ENCODE measurements at regions of chr5 and their contacts with region 1.

Region 1: DNA sequence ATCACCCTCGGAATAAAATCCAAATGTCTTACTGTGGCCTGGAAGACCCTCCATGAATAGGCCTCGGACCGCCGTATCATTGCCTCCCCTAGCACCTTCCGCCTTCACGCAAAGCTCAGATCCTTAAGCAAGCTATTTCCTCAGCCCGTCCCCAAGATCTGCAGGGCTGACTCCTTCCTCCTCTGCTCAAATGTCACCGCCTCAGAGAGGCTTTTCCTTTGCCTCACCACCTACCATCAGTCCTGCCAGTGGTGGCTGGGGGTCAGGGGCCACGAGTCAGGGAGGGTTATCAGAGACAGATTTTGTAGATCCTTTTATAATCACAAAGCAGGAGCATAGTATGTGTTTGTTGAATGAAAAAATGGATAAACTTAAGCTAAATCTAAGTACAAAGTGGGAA is 74.4 kb upstream of the KIF2A start:
- DNase-seq: no peak
- ATAC-seq: no peak
- H3K4me3 ChIP-seq: no peak overlapping the region
- H3K27ac ChIP-seq: no peak overlapping the region
- H3K4me1 ChIP-seq: peaks cover 0 to 4% (median 0%) of the 10 kb centered on the region in 12 donors
- H3K27me3 ChIP-seq: no peaks in the 10 kb centered on the region
- CTCF ChIP-seq: no peak
- POLR2A ChIP-seq: no peak

Region 2: GRCh38 chr5:62284946-62285891 is 53.6 kb after region 1 on chr5:
- intact Hi-C with region 1: loop called in 1 of 10 experiments (anchors 5 kb)
- DNase-seq: no peak
- ATAC-seq: no peak
- H3K4me3 ChIP-seq: no peak overlapping the region
- H3K27ac ChIP-seq: no peak overlapping the region
- H3K4me1 ChIP-seq: no peaks in the 10 kb centered on the region
- H3K27me3 ChIP-seq: peaks cover 0 to 3% (median 0%) of the 10 kb centered on the region in 9 donors
- CTCF ChIP-seq: no peak
- POLR2A ChIP-seq: no peak

Region 3: GRCh38 chr5:62354028-62354874 is 122.7 kb after region 1 on chr5:
- intact Hi-C with region 1: loop called in 1 of 10 experiments (anchors 5 kb)
- DNase-seq: no peak
- ATAC-seq: peak in 3 of 4 donors; percentile 49 to 64 (median 52)
- H3K4me3 ChIP-seq: no peak overlapping the region
- H3K27ac ChIP-seq: no peak overlapping the region
- H3K4me1 ChIP-seq: no peaks in the 10 kb centered on the region
- H3K27me3 ChIP-seq: no peaks in the 10 kb centered on the region
- CTCF ChIP-seq: peak; percentile 45 to 72 (median 66)
- POLR2A ChIP-seq: no peak

Measured in heart left ventricle (tissue), 16 donors.